ENCODE measurements at regions of chr20 and their contacts with region 1.

Region 1: DNA sequence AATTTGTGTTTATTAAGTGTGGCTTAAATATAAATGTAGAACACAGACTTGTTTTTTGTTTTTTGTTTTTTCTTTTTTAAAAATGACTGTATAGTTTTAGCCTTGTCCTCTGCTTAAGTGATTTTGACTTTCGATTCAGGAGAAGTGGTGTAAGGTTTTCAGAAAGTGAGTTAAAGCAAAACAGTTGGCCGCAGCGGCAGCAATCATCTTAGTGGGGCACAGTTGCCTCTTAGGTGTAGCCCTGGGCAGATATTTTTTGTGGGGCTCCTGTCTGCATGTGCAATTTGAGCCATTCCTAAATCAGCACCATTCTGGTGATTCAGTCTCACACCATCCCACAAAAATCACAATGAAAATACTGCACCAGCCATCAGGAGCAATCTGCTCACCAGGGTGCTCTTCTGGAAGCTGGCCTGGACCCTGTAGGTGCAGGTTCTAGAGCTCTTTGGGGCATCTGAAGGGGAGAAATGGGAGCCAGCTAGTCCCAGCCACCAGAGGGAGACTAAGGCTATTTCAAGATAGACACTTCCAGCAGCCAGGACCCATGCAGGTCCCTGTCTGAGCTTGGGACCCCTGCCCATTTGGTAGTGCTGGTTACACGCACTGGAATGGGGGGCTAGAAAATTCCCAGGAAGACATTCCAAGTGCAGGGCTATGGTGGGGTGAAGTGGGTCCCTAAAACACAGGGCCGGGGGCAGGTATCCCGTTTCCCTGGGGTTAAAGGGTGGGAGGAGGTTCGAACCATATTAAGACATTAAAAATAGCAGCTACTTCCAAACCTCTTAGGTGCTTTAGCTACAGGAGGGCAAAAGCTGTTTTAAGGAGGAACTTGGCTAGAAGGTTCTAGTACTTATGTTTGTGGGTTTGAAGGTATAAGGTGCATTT is 156.6 kb downstream of the NFATC2 start:
- DNase-seq: peak; percentile 54
- ATAC-seq: peak; percentile 54
- H3K4me3 Mint-ChIP-seq: no peak overlapping the region
- H3K27ac Mint-ChIP-seq: peak overlapping the region; percentile 58
- H3K4me1 Mint-ChIP-seq: peaks cover 69% of the 10 kb centered on the region
- H3K27me3 Mint-ChIP-seq: no peaks in the 10 kb centered on the region

Region 2: DNA sequence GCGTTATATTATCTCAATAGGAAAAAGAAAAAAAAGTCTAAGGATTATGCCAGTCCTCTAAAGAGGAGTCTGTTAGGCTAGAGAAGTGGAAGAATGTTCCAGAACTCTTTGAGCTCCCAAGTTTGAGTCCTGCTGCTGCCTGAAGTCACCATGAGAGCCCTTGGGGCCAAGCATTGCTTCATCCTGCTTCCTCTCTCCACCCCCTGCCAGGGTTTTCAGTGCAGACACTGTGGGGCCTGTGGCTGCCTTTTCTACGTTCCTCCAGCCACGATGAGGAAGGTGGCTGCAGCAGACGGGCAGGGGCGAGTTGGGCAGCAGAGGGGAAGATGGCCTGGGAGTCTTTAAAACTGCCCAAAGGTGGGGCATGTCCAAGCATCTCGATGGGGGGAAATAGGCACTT is 148.6 kb before region 1 on chr20:
- CTCF ChIA-PET with region 1: no interaction called
- POLR2A ChIA-PET with region 1: no interaction called
- DNase-seq: no peak
- ATAC-seq: no peak
- H3K4me3 Mint-ChIP-seq: no peak overlapping the region
- H3K27ac Mint-ChIP-seq: no peak overlapping the region
- H3K4me1 Mint-ChIP-seq: no peaks in the 10 kb centered on the region
- H3K27me3 Mint-ChIP-seq: peaks cover 4% of the 10 kb centered on the region

Region 3: GRCh38 chr20:51306503-51307358 is 79.2 kb before region 1 on chr20:
- CTCF ChIA-PET with region 1: no interaction called
- POLR2A ChIA-PET with region 1: no interaction called
- DNase-seq: peak; percentile 77
- ATAC-seq: peak; percentile 99
- H3K4me3 Mint-ChIP-seq: no peak overlapping the region
- H3K27ac Mint-ChIP-seq: no peak overlapping the region
- H3K4me1 Mint-ChIP-seq: peaks cover 3% of the 10 kb centered on the region
- H3K27me3 Mint-ChIP-seq: peaks cover 16% of the 10 kb centered on the region

Region 4: GRCh38 chr20:51366155-51366886 is 19.6 kb before region 1 on chr20:
- CTCF ChIA-PET with region 1: no interaction called
- POLR2A ChIA-PET with region 1: no interaction called
- DNase-seq: no peak
- ATAC-seq: no peak
- H3K4me3 Mint-ChIP-seq: no peak overlapping the region
- H3K27ac Mint-ChIP-seq: no peak overlapping the region
- H3K4me1 Mint-ChIP-seq: peaks cover 12% of the 10 kb centered on the region
- H3K27me3 Mint-ChIP-seq: peaks cover under 1% of the 10 kb centered on the region

Region 5: DNA sequence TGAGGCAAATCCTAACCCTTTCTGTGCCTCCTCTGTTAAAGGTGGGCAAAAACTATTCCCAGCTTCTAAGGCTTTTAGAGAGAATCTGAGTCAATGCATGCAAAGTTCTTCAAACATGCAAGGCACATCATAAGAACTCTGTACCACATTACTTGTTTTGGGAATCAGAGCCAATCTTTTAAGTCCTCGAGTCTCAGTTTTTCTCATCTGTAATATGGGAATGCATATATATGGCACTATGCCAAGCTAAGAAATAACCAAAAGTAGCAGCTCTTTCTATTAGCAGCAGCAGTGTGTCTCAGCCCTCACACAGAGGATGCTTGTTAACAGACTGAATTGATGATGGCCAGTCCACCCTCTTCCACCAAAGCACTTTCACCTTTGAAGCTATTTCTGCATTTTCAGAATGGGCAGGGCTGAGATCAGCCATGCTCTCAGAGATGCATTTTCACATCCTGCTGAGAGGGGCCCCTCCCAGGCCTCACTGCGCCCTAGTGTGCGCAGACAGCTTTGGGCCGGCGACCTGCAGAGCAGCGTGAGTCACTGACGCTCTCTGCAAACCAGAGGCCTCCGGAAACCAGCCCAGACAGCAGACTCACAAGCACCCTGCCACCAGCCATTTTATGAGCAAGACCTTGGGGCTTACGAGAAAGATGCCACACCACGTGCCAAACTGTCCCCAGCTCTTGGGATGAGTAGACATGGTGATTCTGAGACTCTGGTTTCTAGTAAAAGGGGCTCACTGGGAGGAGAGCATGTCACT is 18.6 kb after region 1 on chr20:
- CTCF ChIA-PET with region 1: interaction called, 36 read pairs
- POLR2A ChIA-PET with region 1: interaction called, 9 read pairs
- DNase-seq: peak; percentile 88
- ATAC-seq: peak; percentile 79
- H3K4me3 Mint-ChIP-seq: no peak overlapping the region
- H3K27ac Mint-ChIP-seq: peak overlapping the region; percentile 98
- H3K4me1 Mint-ChIP-seq: peaks cover 93% of the 10 kb centered on the region
- H3K27me3 Mint-ChIP-seq: no peaks in the 10 kb centered on the region

Region 6: GRCh38 chr20:51417250-51418136 is 31.6 kb after region 1 on chr20:
- CTCF ChIA-PET with region 1: interaction called, 20 read pairs
- POLR2A ChIA-PET with region 1: no interaction called
- DNase-seq: no peak
- ATAC-seq: no peak
- H3K4me3 Mint-ChIP-seq: peak overlapping the region; percentile 15
- H3K27ac Mint-ChIP-seq: peak overlapping the region; percentile 68
- H3K4me1 Mint-ChIP-seq: peaks cover 74% of the 10 kb centered on the region
- H3K27me3 Mint-ChIP-seq: no peaks in the 10 kb centered on the region

Region 7: DNA sequence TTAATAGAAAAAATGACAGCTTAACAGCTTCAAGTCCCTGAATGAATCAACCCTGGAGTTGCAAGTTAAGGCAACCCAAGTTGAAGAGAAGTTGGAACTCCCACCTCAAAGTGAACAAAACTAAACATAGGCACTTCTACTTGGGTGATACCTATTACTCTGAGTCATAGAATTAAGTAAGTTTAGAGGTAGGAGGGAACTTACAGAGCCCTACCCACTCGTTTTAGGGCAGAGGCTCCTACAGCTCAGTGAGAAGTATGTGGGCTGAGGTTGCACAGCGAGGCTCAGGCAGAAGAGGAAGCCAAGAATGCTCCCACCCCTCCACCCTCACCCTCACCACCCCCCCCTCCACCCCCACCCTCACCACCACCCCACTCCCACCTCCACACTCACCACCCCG is 114.4 kb after region 1 on chr20:
- CTCF ChIA-PET with region 1: interaction called, 11 read pairs
- POLR2A ChIA-PET with region 1: no interaction called
- DNase-seq: peak; percentile 81
- ATAC-seq: peak; percentile 89
- H3K4me3 Mint-ChIP-seq: no peak overlapping the region
- H3K27ac Mint-ChIP-seq: peak overlapping the region; percentile 73
- H3K4me1 Mint-ChIP-seq: peaks cover 88% of the 10 kb centered on the region
- H3K27me3 Mint-ChIP-seq: no peaks in the 10 kb centered on the region